Activated CD8-positive, alpha-beta T cell treated with anti-CD3 and anti-CD28 coated beads, Interleukin-2, amount 10 ng/mL, durations not matched to agents 7 days and 5 days (primary cell): ENCODE measurements at regions of chr20 and their contacts with region 1.

Region 1: GRCh38 chr20:59087829-59088433 is 45.3 kb upstream of the PRELID3B start:
- DNase-seq: peak; percentile 89
- ATAC-seq: peak; percentile 76
- H3K4me3 Mint-ChIP-seq: no peak overlapping the region
- H3K27ac Mint-ChIP-seq: no peak overlapping the region
- H3K4me1 Mint-ChIP-seq: peaks cover 1% of the 10 kb centered on the region
- H3K27me3 Mint-ChIP-seq: peaks cover 11% of the 10 kb centered on the region

Region 2: DNA sequence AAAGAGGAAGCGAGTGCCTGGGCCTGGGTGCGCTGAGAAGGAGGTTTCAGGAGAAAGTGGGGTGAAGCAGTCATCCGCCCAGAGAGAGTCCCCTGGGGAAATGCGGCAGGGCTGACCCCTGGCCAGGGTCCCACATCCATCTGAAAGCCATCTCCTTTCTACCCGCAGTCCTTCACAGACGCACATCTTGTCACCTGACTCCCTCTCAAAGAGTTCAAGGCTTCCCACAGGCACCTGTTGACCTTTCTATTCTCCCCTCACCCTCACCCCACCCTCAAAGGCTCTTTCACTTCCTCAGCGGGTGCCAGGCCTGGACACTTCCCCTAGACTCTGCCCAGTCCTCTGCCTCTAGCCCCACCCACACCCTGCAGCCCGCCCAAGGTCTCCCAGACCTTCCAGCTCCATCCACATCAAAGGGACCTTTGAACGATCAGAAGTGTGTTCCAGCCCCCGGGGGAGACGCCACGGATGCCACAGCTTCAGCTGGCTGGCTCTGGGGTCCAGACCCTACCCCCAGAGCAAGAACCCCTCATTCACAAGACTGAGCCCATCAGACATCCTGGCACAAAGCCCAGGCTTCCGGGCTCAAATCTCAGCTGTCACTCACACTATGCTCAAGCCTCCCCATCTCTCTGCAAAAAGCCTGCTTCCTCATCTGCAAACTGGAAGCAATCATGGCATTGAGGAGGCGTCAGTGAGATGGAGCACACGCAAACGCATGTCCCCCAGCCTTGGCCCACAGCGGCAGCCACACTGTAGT is 83.0 kb before region 1 on chr20:
- CTCF ChIA-PET with region 1: no interaction called
- POLR2A ChIA-PET with region 1: no interaction called
- DNase-seq: peak; percentile 67
- ATAC-seq: peak; percentile 56
- H3K4me3 Mint-ChIP-seq: peak overlapping the region; percentile 72
- H3K27ac Mint-ChIP-seq: peak overlapping the region; percentile 92
- H3K4me1 Mint-ChIP-seq: peaks cover 41% of the 10 kb centered on the region
- H3K27me3 Mint-ChIP-seq: no peaks in the 10 kb centered on the region

Region 3: GRCh38 chr20:59063358-59064213 is 24.3 kb before region 1 on chr20:
- CTCF ChIA-PET with region 1: interaction called, 11 read pairs
- POLR2A ChIA-PET with region 1: no interaction called
- DNase-seq: no peak
- ATAC-seq: no peak
- H3K4me3 Mint-ChIP-seq: no peak overlapping the region
- H3K27ac Mint-ChIP-seq: no peak overlapping the region
- H3K4me1 Mint-ChIP-seq: no peaks in the 10 kb centered on the region
- H3K27me3 Mint-ChIP-seq: peaks cover 19% of the 10 kb centered on the region

Region 4: GRCh38 chr20:59102841-59103299 is 14.9 kb after region 1 on chr20:
- CTCF ChIA-PET with region 1: interaction called, 25 read pairs
- POLR2A ChIA-PET with region 1: interaction called, 3 read pairs
- DNase-seq: no peak
- ATAC-seq: peak; percentile 27
- H3K4me3 Mint-ChIP-seq: no peak overlapping the region
- H3K27ac Mint-ChIP-seq: no peak overlapping the region
- H3K4me1 Mint-ChIP-seq: peaks cover 13% of the 10 kb centered on the region
- H3K27me3 Mint-ChIP-seq: peaks cover 6% of the 10 kb centered on the region

Region 5: DNA sequence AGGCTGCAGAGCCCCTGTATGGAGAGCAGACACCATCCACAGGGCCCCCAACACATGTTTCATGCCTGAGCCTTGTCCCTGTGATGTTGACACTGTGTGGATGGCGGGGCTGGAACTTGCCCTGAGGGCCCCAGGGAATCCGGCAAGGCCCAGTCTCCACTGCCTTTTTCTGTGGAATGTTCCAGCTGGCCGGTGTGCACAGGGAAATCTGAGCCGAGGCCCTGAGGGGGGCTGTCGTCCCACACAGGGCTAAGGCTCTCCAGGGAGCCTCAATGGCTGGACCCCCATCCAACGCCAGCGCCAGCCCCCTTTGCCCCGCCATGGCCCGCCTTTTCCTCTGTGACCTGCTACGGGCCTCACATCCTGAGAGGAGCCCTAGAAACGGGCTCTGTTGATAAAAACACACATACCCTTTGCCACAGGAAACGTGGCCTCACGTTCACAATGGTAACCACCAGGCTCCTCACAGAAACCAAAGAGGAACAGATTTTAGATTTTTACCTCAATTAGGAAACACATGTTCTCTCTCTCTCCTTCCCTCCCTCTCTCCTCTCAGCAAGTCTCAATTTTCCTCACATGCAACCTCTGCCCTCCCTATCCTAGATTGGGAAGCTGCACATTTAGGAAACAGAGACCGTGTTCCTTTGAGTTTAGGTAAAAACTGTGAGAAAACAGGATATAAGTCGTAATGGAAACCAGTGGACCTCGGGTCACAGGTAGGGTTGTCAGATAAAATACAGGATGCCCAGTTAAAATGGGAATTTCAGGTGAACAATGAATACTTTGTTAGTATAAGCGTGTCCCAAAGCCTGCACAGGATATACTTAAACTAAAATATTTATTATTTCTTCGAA is 61.9 kb after region 1 on chr20:
- CTCF ChIA-PET with region 1: interaction called, 18 read pairs
- POLR2A ChIA-PET with region 1: interaction called, 3 read pairs
- DNase-seq: peak; percentile 91
- ATAC-seq: peak; percentile 82
- H3K4me3 Mint-ChIP-seq: peak overlapping the region; percentile 58
- H3K27ac Mint-ChIP-seq: peak overlapping the region; percentile 93
- H3K4me1 Mint-ChIP-seq: peaks cover 85% of the 10 kb centered on the region
- H3K27me3 Mint-ChIP-seq: peaks cover 3% of the 10 kb centered on the region

Region 6: DNA sequence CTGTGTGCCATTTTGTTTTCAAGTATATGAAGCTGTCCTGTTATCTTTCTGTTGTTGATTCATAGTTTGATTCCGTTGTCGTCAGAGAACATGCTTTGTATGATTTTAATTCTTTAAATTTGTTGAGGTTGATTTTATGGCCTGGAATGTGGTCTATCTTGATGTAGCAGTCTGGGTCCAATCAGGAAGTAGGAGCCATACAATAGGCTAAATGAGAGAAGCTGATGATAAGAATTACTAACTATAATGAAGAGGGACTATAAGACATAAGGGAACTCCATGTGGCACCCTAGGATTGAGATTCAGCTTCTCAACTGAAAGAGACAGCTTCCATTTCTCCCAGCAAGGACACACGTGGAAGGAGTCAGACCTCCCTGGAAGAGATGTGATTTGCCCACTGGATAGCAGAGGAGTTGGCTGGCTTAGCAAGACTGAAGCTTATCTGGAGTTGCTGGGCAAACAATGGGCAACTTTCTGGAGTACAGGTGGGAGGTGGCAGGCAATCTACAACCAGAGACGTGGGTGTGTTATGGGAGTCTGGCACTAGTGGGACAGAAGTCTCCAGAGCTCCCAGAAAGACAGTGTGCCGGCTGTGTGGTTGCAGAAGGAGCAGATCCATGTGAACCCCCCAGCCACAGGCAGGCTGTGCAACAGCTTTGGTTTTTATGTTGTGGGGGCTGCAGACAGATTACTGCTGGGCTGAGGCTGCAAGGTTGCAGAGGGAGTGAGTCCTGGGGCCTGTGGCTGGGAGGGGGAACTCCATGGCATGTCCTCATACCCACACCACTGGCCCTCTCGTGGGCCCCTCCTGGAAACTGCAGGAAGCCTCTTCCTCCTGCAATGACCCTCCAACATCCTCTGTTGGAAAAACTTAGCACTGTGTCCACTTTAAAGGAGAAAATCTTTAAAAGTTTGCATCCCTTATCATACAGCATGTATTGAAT is 82.7 kb after region 1 on chr20:
- CTCF ChIA-PET with region 1: interaction called, 14 read pairs
- POLR2A ChIA-PET with region 1: no interaction called
- DNase-seq: no peak
- ATAC-seq: no peak
- H3K4me3 Mint-ChIP-seq: no peak overlapping the region
- H3K27ac Mint-ChIP-seq: no peak overlapping the region
- H3K4me1 Mint-ChIP-seq: peaks cover 79% of the 10 kb centered on the region
- H3K27me3 Mint-ChIP-seq: no peaks in the 10 kb centered on the region

Region 7: GRCh38 chr20:59214606-59215547 is 126.9 kb after region 1 on chr20:
- CTCF ChIA-PET with region 1: interaction called, 177 read pairs
- POLR2A ChIA-PET with region 1: interaction called, 3 read pairs
- DNase-seq: no peak
- ATAC-seq: no peak
- H3K4me3 Mint-ChIP-seq: no peak overlapping the region
- H3K27ac Mint-ChIP-seq: no peak overlapping the region
- H3K4me1 Mint-ChIP-seq: no peaks in the 10 kb centered on the region
- H3K27me3 Mint-ChIP-seq: no peaks in the 10 kb centered on the region

Region 8: DNA sequence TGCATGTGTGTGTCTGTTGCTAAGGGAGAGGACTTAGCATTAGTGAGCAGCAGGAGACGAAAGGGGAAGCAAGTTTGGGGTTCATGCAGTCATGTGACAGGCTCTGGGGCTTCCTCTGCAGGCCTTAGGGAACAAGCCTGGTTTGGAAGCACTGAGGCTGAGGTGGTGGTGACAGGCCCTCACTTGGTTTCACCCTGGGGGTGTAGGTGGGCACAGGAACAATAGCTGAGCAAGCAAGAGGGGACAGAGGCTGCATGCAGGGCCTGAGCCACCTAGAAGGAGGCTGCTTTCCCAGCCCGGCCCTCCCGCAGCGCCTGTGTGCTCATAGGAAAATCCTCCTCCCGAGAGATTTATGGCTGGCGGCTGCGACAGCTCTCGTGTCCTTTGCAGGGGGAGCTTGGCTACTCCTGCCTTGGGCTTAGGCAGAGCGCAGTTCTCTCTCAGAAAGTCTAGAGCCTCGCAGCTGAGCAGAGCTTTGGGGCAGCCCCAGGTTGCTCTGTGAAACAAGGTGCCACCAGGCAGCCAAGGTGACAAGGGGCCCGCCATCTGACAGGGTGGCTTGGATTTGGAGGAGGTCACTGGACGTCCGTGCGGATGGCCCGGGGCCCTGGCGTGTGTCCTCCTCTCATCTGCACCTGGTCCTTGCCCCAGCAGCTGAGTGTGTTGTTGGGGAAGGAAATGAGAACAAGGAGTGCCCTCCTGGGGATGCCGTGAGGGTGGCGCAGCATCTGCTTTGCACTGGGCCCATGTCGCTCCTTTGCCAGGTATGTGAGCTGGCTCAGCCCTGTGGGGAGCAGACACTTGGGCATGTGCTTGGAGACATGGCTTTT is 254.1 kb after region 1 on chr20:
- CTCF ChIA-PET with region 1: no interaction called
- POLR2A ChIA-PET with region 1: no interaction called
- DNase-seq: no peak
- ATAC-seq: no peak
- H3K4me3 Mint-ChIP-seq: no peak overlapping the region
- H3K27ac Mint-ChIP-seq: no peak overlapping the region
- H3K4me1 Mint-ChIP-seq: no peaks in the 10 kb centered on the region
- H3K27me3 Mint-ChIP-seq: peaks cover 8% of the 10 kb centered on the region

Region 9: DNA sequence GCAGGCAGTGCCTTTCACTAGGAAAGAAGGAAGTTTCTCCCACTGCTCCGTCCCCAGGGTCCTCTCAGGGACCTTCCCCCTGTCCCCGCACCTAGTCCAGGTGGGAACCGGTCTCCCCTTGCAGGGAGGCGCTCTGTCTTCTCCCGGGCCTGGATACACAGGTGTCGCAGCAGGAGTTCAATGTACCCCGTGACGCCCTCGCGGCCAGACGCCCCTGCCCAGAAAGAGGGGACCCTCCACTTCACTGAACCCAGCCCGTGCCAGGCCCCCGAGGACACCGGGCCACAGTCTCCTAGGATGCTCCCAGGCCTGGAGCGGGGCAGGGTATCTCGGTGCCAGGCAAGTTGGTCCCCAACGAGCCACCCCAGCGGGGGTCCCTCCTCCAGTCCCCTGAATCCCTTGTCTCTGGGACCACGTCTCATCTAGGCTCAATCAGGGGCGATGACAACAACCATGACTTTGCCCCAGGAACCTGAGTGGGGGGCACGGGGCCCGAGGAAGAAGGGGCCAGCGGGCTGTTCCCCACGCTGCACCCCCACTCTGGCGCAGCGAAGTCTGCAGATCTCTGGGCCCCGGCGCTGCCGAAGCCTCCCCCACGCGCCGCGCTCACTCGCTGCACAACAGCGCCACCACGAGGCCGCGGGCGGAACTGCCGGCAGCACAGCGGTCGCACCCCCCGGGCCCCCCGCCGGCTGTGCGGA is 315.5 kb after region 1 on chr20:
- CTCF ChIA-PET with region 1: interaction called, 25 read pairs
- POLR2A ChIA-PET with region 1: no interaction called
- DNase-seq: peak; percentile 78
- ATAC-seq: peak; percentile 84
- H3K4me3 Mint-ChIP-seq: peak overlapping the region; percentile 58
- H3K27ac Mint-ChIP-seq: no peak overlapping the region
- H3K4me1 Mint-ChIP-seq: peaks cover 5% of the 10 kb centered on the region
- H3K27me3 Mint-ChIP-seq: peaks cover 14% of the 10 kb centered on the region